Caco-2 (cell line): ENCODE measurements at regions of chr18 and their contacts with region 1.

Region 1: DNA sequence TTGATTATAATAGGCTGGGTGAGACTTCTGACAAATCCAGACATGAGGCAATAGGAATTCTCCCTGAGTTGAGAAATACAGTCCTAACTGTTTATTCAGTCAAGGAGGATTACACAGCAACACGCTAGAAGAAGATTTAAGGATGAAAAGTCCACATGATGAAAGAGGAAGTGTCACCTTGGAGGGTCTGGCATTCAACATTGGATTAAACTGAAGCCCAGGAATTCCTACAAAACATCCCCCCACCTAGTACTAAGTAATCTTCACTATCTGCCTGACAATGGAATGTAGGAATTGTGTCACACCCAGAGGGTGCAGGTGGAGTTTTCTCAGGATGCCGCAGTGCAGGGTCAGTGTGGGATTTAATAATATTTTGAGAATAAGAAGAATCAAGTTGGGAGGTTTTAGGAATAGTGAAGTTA is 142.4 kb downstream of the SOCS6 start:
- DNase-seq: peak; percentile 71 to 76
- H3K4me3 ChIP-seq: no peak overlapping the region
- H3K4me3 Mint-ChIP-seq: peak overlapping the region; percentile 66
- H3K27ac Mint-ChIP-seq: peak overlapping the region; percentile 96
- H3K4me1 ChIP-seq: peaks cover 54% of the 10 kb centered on the region
- H3K4me1 Mint-ChIP-seq: peaks cover 7% of the 10 kb centered on the region
- H3K27me3 ChIP-seq: no peaks in the 10 kb centered on the region
- H3K27me3 Mint-ChIP-seq: no peaks in the 10 kb centered on the region
- CTCF ChIP-seq: no peak

Region 2: GRCh38 chr18:70195852-70196434 is 235.3 kb before region 1 on chr18:
- CTCF ChIA-PET with region 1: interaction called, 10 read pairs
- POLR2A ChIA-PET with region 1: no interaction called
- intact Hi-C with region 1: loop called (anchors 1 kb)
- DNase-seq: peak in 1 of 2 experiments; percentile 23
- H3K4me3 ChIP-seq: no peak overlapping the region
- H3K4me3 Mint-ChIP-seq: no peak overlapping the region
- H3K27ac Mint-ChIP-seq: no peak overlapping the region
- H3K4me1 ChIP-seq: peaks cover 17% of the 10 kb centered on the region; the same call in 1 of the 2 replicates
- H3K4me1 Mint-ChIP-seq: peaks cover 12% of the 10 kb centered on the region
- H3K27me3 ChIP-seq: no peaks in the 10 kb centered on the region
- H3K27me3 Mint-ChIP-seq: no peaks in the 10 kb centered on the region
- CTCF ChIP-seq: peak; percentile 31 to 40

Region 3: DNA sequence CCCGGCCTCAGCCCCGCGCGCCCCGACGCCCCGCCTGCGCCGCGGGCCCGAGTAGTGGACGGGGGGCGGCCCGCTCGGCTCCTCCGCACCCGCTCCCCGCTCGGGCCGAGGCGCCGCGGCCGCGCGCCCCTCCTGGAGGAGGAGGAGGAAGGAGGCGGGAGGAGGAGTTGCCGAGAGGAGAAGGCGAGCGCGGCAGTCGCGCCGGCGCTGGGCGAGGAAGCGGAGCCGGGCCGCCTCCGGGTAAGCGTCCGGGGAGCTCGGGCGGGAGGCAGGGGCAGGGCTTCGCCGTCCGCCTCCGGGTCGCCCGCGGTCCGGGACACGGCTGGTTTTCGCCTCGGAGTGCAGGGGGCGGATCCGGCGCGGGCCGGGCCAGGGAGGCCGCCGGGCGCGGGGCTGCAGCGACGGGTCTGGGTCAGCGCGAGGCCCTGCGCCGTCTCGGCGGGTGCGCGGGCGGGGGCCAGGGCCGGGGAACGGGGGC is 142.3 kb before region 1 on chr18 and contains the start of gene SOCS6:
- CTCF ChIA-PET with region 1: interaction called, 3 read pairs
- POLR2A ChIA-PET with region 1: no interaction called
- intact Hi-C with region 1: loop called (anchors 5 kb)
- DNase-seq: peak; percentile 41 to 61
- H3K4me3 ChIP-seq: peak within 1 kb of the TSS; percentile 57
- H3K4me3 Mint-ChIP-seq: peak within 1 kb of the TSS; percentile 70
- H3K27ac Mint-ChIP-seq: no peak within 1 kb of the TSS
- H3K4me1 ChIP-seq: peaks cover 5% of the 10 kb centered on the region; the same call in 1 of the 2 replicates
- H3K4me1 Mint-ChIP-seq: peaks cover 6% of the 10 kb centered on the region
- H3K27me3 ChIP-seq: no peaks in the 10 kb centered on the region
- H3K27me3 Mint-ChIP-seq: no peaks in the 10 kb centered on the region
- CTCF ChIP-seq: no peak
- total RNA-seq, gene SOCS6: 19.0 and 23.2 TPM in 2 replicates

Region 4: DNA sequence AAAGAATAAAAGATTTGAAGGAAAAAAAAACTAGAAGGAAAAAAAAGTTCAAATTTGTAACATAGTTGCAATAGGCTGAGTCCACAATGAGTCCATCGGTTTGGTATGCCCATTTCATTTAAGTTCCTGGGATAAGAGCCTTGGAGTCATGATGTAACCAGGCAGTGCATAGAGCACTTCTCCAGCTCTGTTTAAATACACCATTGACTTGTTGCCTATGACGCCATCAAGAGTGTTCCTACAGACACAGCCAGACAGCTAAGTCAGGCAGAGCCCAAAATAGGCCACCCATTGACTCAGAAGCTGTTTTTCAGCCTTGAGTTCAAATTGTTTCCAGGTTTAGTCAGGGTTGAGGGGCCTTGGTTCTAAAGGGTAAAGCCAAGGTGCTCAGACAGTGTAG is 97.5 kb before region 1 on chr18:
- CTCF ChIA-PET with region 1: no interaction called
- POLR2A ChIA-PET with region 1: no interaction called
- intact Hi-C with region 1: loop called (anchors 5 kb)
- DNase-seq: peak in 1 of 2 experiments; percentile 8
- H3K4me3 ChIP-seq: no peak overlapping the region
- H3K4me3 Mint-ChIP-seq: no peak overlapping the region
- H3K27ac Mint-ChIP-seq: no peak overlapping the region
- H3K4me1 ChIP-seq: 0 out of 2 replicates have a peak, but pooled peaks cover 4% of the 10 kb centered on the region
- H3K4me1 Mint-ChIP-seq: no peaks in the 10 kb centered on the region
- H3K27me3 ChIP-seq: no peaks in the 10 kb centered on the region
- H3K27me3 Mint-ChIP-seq: no peaks in the 10 kb centered on the region
- CTCF ChIP-seq: no peak

Region 5: DNA sequence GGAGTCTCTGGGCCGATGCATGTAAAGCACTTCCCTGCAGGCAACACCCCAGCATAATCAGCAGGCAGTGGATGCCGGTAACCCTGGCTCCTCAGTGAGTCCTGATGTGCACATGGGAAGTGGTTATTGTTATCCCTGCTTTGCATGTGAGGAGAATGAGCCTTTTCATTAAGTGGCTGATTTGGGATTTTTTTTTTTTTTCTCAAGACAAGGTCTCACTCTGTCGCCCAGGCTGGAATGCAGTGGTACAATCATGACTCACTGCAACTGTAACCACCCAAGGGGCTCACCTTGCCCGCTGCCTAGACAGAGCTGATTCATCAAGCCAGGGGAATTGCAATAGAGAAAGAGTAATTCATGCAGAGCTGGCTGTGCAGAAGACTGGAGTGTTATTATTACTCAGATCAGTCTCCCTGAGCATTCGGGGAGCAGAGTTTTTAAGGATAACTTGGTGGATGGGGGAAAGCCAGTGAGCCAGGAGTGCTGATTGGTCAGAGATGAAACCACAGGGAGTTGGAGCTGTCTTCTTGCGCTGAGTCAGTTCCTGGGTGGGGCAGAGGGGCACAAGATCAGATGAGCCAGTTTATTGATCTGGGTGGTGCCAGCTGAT is 46.9 kb before region 1 on chr18:
- CTCF ChIA-PET with region 1: interaction called, 5 read pairs
- POLR2A ChIA-PET with region 1: interaction called, 6 read pairs
- intact Hi-C with region 1: loop called (anchors 1 kb)
- DNase-seq: peak in 1 of 2 experiments; percentile 28
- H3K4me3 ChIP-seq: no peak overlapping the region
- H3K4me3 Mint-ChIP-seq: no peak overlapping the region
- H3K27ac Mint-ChIP-seq: peak overlapping the region; percentile 72
- H3K4me1 ChIP-seq: peaks cover 22% of the 10 kb centered on the region
- H3K4me1 Mint-ChIP-seq: peaks cover 16% of the 10 kb centered on the region
- H3K27me3 ChIP-seq: no peaks in the 10 kb centered on the region
- H3K27me3 Mint-ChIP-seq: no peaks in the 10 kb centered on the region
- CTCF ChIP-seq: no peak